ENCODE measurements at regions of chr2 and their contacts with region 1.

Region 1: GRCh38 chr2:55419679-55420438 is at the start of gene CCDC88A:
- DNase-seq: peak; percentile 90
- H3K4me3 ChIP-seq: peak within 1 kb of the TSS; percentile 79 to 83
- H3K27ac ChIP-seq: peak within 1 kb of the TSS; percentile 69 to 80
- H3K4me1 ChIP-seq: no peaks in the 10 kb centered on the region
- H3K27me3 ChIP-seq: no peaks in the 10 kb centered on the region
- CTCF ChIP-seq: peak in 3 of 4 experiments; percentile 8 to 29 (median 29)
- POLR2A ChIP-seq: no peak
- total RNA-seq, gene CCDC88A: 16.8 to 43.7 TPM

Region 2: GRCh38 chr2:55282110-55282917 is 137.5 kb before region 1 on chr2:
- intact Hi-C with region 1: loop called (anchors 5 kb)
- DNase-seq: peak; percentile 65
- H3K4me3 ChIP-seq: peak overlapping the region; percentile 69 to 75
- H3K27ac ChIP-seq: peak overlapping the region; percentile 87 to 93
- H3K4me1 ChIP-seq: no peaks in the 10 kb centered on the region
- H3K27me3 ChIP-seq: no peaks in the 10 kb centered on the region
- CTCF ChIP-seq: no peak
- POLR2A ChIP-seq: peak; percentile 65

Region 3: DNA sequence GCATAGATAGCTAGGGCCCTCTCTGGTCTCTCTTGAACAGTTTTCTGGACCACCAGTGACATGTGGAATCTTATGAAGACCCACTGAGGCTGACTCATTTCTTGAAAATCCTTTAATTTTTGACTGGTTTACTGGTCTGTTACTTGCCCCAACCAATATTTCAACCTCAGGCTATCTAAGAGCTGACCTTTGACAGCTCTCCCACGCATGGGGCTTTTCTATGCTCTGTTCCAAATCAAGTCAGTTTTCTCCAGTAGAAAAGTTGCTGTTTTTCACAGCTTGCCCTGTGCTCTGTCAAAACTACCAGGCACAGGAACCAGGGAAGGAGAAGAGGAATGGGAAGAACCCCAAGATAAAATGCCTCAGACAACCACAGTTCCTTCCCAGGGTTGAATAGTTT is 104.9 kb before region 1 on chr2:
- intact Hi-C with region 1: no loop called
- DNase-seq: no peak
- H3K4me3 ChIP-seq: no peak overlapping the region
- H3K27ac ChIP-seq: no peak overlapping the region
- H3K4me1 ChIP-seq: no peaks in the 10 kb centered on the region
- H3K27me3 ChIP-seq: no peaks in the 10 kb centered on the region
- CTCF ChIP-seq: no peak
- POLR2A ChIP-seq: no peak

Region 4: GRCh38 chr2:55364189-55365055 is 55.4 kb before region 1 on chr2:
- intact Hi-C with region 1: loop called (anchors 5 kb)
- DNase-seq: peak; percentile 81
- H3K4me3 ChIP-seq: no peak overlapping the region
- H3K27ac ChIP-seq: peak overlapping the region in 1 of 2 donors; percentile 7
- H3K4me1 ChIP-seq: no peaks in the 10 kb centered on the region
- H3K27me3 ChIP-seq: no peaks in the 10 kb centered on the region
- CTCF ChIP-seq: no peak
- POLR2A ChIP-seq: no peak

Region 5: DNA sequence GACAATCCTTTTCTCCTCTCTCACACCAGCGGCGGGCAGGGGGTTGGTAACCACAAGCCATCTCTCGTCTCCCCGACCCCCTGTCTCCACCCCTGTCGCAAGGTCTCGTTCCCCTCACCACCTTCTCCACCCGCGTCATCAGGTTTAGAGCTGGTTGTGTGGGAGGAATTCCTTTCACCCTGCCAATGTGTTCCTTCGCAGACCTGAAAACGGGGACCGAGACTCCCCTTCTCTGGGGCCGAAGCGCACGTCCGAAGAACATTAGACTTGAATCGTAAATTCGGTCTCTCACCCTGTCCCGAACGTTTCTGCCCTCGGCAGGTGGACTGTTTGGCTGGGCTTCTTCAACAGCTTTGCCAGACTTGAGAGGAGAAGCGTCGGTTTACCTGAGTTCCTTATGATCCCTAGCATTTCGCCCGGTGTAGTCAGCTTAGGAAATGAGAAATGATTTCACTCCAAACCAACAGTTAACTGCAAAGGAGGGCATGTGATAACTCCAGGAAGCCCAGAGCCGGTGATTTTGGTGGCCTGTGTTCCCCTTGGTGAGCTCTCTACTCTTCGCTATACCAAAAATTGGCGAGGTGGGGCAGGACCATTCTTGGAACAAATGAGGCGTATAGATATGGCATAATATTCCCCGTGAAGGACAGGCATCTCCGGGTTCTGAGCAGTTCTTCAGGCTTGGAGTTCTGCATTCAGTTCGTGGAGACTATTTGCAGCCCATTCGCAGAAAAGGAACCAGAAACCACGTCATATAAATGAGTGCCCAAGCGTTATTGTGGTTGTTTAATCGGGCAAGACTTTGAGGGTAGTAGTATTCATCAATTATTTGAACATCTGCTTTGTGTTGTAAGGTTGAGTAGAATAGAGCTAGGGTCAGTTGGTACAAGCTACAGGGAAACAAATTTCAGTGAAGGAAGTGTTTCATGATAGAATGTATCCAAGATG is 100.4 kb after region 1 on chr2:
- intact Hi-C with region 1: loop called (anchors 10 kb)
- DNase-seq: peak; percentile 32
- H3K4me3 ChIP-seq: peak overlapping the region; percentile 72 to 77
- H3K27ac ChIP-seq: peak overlapping the region; percentile 83 to 85
- H3K4me1 ChIP-seq: no peaks in the 10 kb centered on the region
- H3K27me3 ChIP-seq: no peaks in the 10 kb centered on the region
- CTCF ChIP-seq: no peak
- POLR2A ChIP-seq: no peak

Region 6: DNA sequence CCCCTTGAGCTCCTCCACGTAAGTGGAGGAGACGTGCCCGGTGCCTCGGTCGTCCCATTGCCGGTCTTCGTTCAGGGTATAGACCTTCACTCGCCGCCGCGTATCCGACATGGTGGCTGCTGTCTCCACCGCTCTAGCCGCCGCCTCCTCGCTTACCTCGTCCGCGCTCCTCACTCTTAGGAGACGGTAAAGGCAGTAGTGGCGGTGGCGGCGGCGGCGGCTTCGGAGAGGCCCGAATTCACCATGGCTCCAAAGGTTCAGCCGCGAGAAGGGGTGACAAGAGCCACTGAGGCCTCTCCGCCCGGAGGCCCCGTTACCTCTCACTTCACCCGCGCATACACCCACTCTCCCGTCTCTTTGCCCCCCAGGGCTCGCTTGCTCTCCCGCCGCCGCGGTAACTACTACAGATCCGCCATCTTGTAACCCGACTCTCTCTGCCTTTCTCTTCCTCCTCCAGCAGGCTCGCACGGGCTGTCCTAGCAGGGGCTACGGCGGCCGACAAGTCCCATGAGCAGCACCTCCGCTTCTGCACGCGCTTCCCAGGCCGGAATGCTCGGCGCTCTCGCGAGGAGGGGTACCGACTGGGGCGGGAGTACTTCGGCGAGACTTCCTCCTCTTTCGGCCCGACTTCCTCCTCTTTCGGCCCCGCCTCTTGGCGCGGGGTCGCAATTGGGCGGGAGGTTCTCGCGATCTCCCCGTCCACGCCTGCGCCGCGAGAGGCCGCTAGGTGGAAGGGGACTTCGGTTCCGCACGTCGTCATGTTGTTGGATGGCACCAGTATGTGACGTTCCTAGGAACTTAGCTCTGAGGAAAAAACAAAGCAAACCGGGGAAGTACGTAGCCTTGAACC is 197.5 kb after region 1 on chr2 and contains the start of gene PPP4R3B:
- intact Hi-C with region 1: loop called (anchors 5 kb)
- DNase-seq: peak; percentile 99
- H3K4me3 ChIP-seq: peak within 1 kb of the TSS; percentile 94 to 96
- H3K27ac ChIP-seq: peak within 1 kb of the TSS; percentile 91 to 96
- H3K4me1 ChIP-seq: peaks cover 3% of the 10 kb centered on the region
- H3K27me3 ChIP-seq: no peaks in the 10 kb centered on the region
- CTCF ChIP-seq: peak in 3 of 4 experiments; percentile 44 to 93 (median 82)
- POLR2A ChIP-seq: peak; percentile 93
- total RNA-seq, gene PPP4R3B: 51.4 to 62.0 TPM